Activated CD4-positive, alpha-beta T cell treated with anti-CD3 and anti-CD28 coated beads for 36 hours (primary cell): ENCODE measurements at regions of chr6 and their contacts with region 1.

Region 1: DNA sequence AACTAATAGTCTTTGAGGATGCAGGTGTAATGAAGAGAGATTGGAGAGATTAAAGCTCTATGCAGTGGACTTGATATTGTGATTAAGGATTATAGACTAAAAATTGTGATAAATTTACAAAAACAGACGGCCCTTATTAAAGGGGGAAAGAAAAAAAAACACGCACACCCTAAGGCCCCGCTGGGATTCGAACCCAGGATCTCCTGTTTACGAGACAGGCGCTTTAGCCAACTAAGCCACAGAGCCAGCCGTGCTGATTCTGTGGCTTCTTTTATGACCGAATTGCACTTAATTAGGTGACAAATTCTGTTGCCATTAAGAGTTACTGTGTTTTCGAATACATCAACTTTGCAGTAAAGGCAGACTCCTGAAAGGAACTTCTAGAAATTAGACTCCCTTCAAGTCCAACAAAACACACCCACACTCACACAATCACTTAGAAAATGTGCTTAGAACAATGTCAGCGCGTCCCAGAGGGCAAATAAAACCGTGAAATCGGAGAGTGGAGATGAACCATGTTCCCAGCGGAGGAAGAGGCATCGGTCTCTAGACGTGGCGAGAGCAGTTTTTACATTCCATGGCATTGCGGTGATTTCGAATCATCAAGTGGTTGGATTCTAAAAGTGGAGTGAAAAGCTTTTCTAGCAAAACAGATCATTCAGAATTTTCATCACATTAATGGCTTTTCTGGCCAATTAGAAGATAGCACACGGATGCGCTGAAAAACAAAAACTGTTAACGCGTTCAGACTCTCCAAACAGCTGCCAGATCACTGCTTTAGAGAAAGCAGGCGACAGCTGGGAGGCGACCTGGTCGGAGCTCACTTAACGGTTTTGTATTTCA is 122.6 kb downstream of the GPX5 start:
- DNase-seq: peak; percentile 83
- ATAC-seq: peak; percentile 74
- H3K4me3 Mint-ChIP-seq: peak overlapping the region; percentile 78
- H3K27ac Mint-ChIP-seq: peak overlapping the region; percentile 26
- H3K4me1 Mint-ChIP-seq: peaks cover 7% of the 10 kb centered on the region
- H3K27me3 Mint-ChIP-seq: peaks cover 50% of the 10 kb centered on the region

Region 2: GRCh38 chr6:28606424-28607400 is 41.5 kb before region 1 on chr6:
- CTCF ChIA-PET with region 1: no interaction called
- POLR2A ChIA-PET with region 1: no interaction called
- intact Hi-C with region 1: loop called in 1 of 2 experiments (anchors 2 kb)
- DNase-seq: peak; percentile 75
- ATAC-seq: peak; percentile 87
- H3K4me3 Mint-ChIP-seq: peak overlapping the region; percentile 66
- H3K27ac Mint-ChIP-seq: peak overlapping the region; percentile 55
- H3K4me1 Mint-ChIP-seq: peaks cover 6% of the 10 kb centered on the region
- H3K27me3 Mint-ChIP-seq: peaks cover 41% of the 10 kb centered on the region

Region 3: DNA sequence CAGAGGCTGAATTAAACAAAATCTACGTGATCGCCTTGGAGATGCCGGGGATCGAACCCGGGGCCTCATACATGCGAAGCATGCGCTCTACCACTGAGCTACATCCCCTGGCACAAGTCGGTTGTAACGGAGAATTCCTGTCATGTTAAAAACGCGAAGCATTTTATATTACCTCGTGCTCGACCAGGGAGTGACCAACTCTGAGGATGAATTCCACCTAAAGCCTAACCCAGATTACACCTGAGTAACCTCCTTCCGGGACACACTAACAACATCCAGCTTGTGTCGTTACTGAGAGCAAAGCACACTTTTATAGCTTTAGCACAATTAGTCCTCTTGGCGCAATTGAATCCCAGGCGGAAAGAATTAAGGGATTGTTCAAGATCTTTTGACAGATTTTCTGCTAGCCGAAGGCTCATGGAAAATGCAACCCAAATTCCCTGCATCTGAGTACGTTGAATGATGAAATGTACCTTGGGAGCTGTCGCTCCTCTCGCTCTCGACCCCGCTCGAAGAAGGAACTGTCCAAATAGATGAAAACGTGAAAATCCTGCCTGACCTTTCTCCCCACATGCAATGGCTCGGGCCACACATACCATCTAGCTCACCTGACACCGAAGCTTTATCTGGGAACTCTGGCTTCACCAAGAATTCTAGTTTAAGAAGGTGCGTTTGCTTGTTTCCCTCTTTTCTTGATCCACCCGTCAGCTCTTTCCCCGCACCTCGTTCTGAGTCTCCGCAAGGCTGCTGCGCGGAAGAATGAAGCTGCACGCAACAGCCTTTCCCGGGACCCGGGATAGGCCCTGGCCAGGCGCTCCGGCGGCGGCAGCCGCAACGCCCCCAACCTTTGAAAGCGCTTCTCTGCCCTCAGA is 25.8 kb after region 1 on chr6:
- CTCF ChIA-PET with region 1: no interaction called
- POLR2A ChIA-PET with region 1: no interaction called
- intact Hi-C with region 1: loop called in 1 of 2 experiments (anchors 2 kb)
- DNase-seq: peak; percentile 82
- ATAC-seq: peak; percentile 75
- H3K4me3 Mint-ChIP-seq: peak overlapping the region; percentile 74
- H3K27ac Mint-ChIP-seq: peak overlapping the region; percentile 64
- H3K4me1 Mint-ChIP-seq: peaks cover 8% of the 10 kb centered on the region
- H3K27me3 Mint-ChIP-seq: peaks cover 59% of the 10 kb centered on the region

Region 4: DNA sequence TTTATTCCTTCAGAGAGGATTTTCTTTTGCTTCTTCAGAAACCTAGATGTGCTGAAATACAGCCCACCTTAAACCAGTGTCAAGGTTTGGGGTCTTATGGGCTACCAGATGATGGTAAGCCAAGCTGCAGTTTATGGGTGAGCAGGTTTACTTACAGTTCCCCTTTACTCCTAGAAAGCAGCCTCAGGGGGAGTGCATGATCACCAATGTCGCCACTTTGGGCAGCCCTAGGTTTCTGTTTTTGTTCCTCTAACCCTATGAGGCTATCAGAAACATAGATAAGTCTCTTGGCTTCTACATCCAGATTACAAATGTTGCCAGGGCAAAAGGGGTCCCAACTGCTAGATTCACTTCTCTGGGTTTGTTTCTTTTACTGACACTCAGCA is 208.4 kb after region 1 on chr6:
- CTCF ChIA-PET with region 1: no interaction called
- POLR2A ChIA-PET with region 1: no interaction called
- intact Hi-C with region 1: no loop called
- DNase-seq: no peak
- ATAC-seq: no peak
- H3K4me3 Mint-ChIP-seq: no peak overlapping the region
- H3K27ac Mint-ChIP-seq: no peak overlapping the region
- H3K4me1 Mint-ChIP-seq: peaks cover 5% of the 10 kb centered on the region
- H3K27me3 Mint-ChIP-seq: peaks cover 2% of the 10 kb centered on the region